CD4-positive, alpha-beta T cell (primary cell): ENCODE measurements at regions of chr10 and their contacts with region 1.

Region 1: GRCh38 chr10:113679463-113680189 is at the start of gene CASP7:
- DNase-seq: peak; percentile 57 to 91 (median 70)
- ATAC-seq: peak; percentile 85
- H3K4me3 ChIP-seq: peak within 1 kb of the TSS; percentile 77
- H3K4me3 Mint-ChIP-seq: peak within 1 kb of the TSS; percentile 98
- H3K27ac ChIP-seq: peak within 1 kb of the TSS; percentile 59 to 75
- H3K27ac Mint-ChIP-seq: peak within 1 kb of the TSS; percentile 88
- H3K4me1 ChIP-seq: peaks cover 25% of the 10 kb centered on the region
- H3K4me1 Mint-ChIP-seq: peaks cover 32% of the 10 kb centered on the region
- H3K27me3 ChIP-seq: no peaks in the 10 kb centered on the region
- H3K27me3 Mint-ChIP-seq: no peaks in the 10 kb centered on the region
- CTCF ChIP-seq: peak; percentile 8
- total RNA-seq, gene CASP7: 8.5 to 8.6 TPM

Region 2: GRCh38 chr10:113854011-113854760 is 174.6 kb after region 1 on chr10 and contains the starts of genes DCLRE1A and NHLRC2:
- CTCF ChIA-PET with region 1: no interaction called
- POLR2A ChIA-PET with region 1: no interaction called
- intact Hi-C with region 1: loop called in 1 of 2 experiments (anchors 10 kb)
- DNase-seq: peak; percentile 32 to 79 (median 54)
- ATAC-seq: peak; percentile 47
- H3K4me3 ChIP-seq: peak within 1 kb of the TSS; percentile 84
- H3K4me3 Mint-ChIP-seq: peak within 1 kb of the TSS; percentile 99
- H3K27ac ChIP-seq: peak within 1 kb of the TSS; percentile 42 to 51
- H3K27ac Mint-ChIP-seq: peak within 1 kb of the TSS; percentile 90
- H3K4me1 ChIP-seq: peaks cover 23% of the 10 kb centered on the region
- H3K4me1 Mint-ChIP-seq: peaks cover 59% of the 10 kb centered on the region
- H3K27me3 ChIP-seq: no peaks in the 10 kb centered on the region
- H3K27me3 Mint-ChIP-seq: no peaks in the 10 kb centered on the region
- CTCF ChIP-seq: no peak
- total RNA-seq, gene DCLRE1A: 0.36 to 0.47 TPM
- total RNA-seq, gene NHLRC2: 4.6 TPM